Ovary (tissue), 10 donors: ENCODE measurements at regions of chr2 and their contacts with region 1.

Region 1: GRCh38 chr2:7703523-7704144 is 786.4 kb downstream of the RNF144A start:
- DNase-seq: no peak
- H3K4me3 ChIP-seq: no peak overlapping the region
- H3K27ac ChIP-seq: no peak overlapping the region
- H3K4me1 ChIP-seq: no peaks in the 10 kb centered on the region
- H3K27me3 ChIP-seq: no peaks in the 10 kb centered on the region
- CTCF ChIP-seq: no peak
- EP300 ChIP-seq: no peak
- POLR2A ChIP-seq: no peak

Region 2: GRCh38 chr2:7286120-7286519 is 417.5 kb before region 1 on chr2:
- intact Hi-C with region 1: loop called in 1 of 4 experiments (anchors 2 kb)
- DNase-seq: no peak
- H3K4me3 ChIP-seq: no peak overlapping the region
- H3K27ac ChIP-seq: no peak overlapping the region
- H3K4me1 ChIP-seq: no peaks in the 10 kb centered on the region
- H3K27me3 ChIP-seq: no peaks in the 10 kb centered on the region
- CTCF ChIP-seq: no peak
- EP300 ChIP-seq: no peak
- POLR2A ChIP-seq: no peak